Right ventricle myocardium inferior (tissue), 1 donor: ENCODE measurements at regions of chr17 and their contacts with region 1.

Region 1: GRCh38 chr17:2511462-2512369 is at the start of gene METTL16:
- DNase-seq: peak; percentile 99
- ATAC-seq: peak; percentile 100
- total RNA-seq, gene METTL16: 20.1 TPM

Region 2: DNA sequence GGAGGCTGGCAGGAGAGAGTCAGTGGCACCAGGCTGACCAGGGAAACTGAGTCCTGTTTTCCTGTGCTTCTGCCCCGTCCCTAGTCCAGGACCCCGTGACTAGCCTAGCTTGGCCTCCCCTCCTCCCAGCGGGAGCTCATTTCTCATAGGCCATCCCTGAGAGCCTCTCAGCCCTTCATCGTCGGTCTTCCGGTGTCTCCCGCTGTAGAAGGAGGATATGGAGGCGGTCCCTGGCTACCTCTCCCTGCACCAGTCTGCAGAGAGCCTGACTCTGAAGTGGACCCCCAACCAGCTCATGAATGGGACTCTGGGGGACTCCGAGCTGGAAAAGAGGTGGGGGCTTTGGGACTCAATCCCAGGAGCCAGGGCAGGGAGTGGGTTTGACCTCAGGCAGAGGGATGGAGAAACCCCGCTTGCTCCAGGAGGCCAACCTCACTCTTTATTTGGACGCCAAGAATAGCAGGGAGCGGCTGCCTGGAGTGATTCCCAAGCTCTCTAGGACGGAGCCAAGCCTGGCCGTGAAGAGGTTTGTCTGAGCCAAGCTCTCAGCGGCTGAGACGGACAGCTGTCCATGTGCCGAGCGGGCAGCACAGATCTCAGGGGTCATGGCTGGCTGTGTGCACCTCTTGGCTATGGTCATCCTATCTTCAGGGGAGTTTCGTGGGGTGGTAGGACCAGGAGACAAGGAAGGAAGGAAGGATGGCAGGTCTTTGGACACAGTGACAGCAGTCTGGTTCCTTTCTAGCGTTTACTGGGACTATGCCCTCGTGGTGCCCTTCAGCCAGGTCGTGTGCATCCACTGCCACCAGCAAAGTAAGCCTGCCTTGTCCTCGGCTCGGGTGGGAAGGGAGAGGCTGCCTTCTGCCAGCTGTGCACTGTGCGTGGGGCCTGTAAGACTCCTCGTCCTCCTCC is 147.6 kb before region 1 on chr17:
- intact Hi-C with region 1: no loop called
- DNase-seq: peak; percentile 80
- ATAC-seq: peak; percentile 71

Region 3: DNA sequence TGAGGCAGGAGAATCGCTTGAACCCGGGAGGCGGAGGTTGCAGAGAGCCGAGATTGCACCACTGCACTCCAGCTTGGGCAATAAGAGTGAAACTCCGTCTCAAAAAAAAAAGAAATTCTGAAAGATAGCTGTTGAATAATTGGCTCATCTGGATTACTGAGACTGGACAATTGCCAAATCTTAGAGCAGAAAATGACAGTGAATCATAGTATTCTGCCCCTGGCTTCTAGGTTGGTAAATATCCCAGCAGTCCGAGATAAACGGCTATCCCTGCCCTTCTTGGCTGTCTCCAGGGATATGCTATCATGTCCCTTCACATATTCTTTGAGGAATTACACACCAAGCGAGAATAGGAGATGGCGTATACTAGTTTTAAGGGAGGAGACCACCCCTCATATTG is 35.5 kb after region 1 on chr17:
- intact Hi-C with region 1: no loop called
- DNase-seq: no peak
- ATAC-seq: no peak

Region 4: GRCh38 chr17:2624292-2624731 is 112.6 kb after region 1 on chr17:
- intact Hi-C with region 1: loop called (anchors 10 kb)
- DNase-seq: no peak
- ATAC-seq: no peak